CD8-positive, alpha-beta T cell (primary cell): ENCODE measurements at regions of chr13 and their contacts with region 1.

Region 1: GRCh38 chr13:99087096-99087953 is 109.5 kb upstream of the DOCK9 start:
- DNase-seq: peak; percentile 84 to 96 (median 93)
- ATAC-seq: peak; percentile 74
- H3K4me3 ChIP-seq: peak overlapping the region; percentile 66 to 78
- H3K4me3 Mint-ChIP-seq: peak overlapping the region; percentile 94
- H3K27ac ChIP-seq: peak overlapping the region; percentile 85 to 93
- H3K27ac Mint-ChIP-seq: peak overlapping the region; percentile 99
- H3K4me1 ChIP-seq: peaks cover 43% of the 10 kb centered on the region
- H3K4me1 Mint-ChIP-seq: peaks cover 43% of the 10 kb centered on the region
- H3K27me3 ChIP-seq: no peaks in the 10 kb centered on the region
- H3K27me3 Mint-ChIP-seq: no peaks in the 10 kb centered on the region
- CTCF ChIP-seq: peak; percentile 46

Region 2: GRCh38 chr13:98910501-98910951 is 176.8 kb before region 1 on chr13:
- CTCF ChIA-PET with region 1: no interaction called
- POLR2A ChIA-PET with region 1: interaction called, 3 read pairs
- intact Hi-C with region 1: loop called in 1 of 2 experiments (anchors 5 kb)
- DNase-seq: peak in 5 of 9 experiments; percentile 12 to 48 (median 23)
- ATAC-seq: peak; percentile 77
- H3K4me3 ChIP-seq: no peak overlapping the region
- H3K4me3 Mint-ChIP-seq: peak overlapping the region; percentile 38
- H3K27ac ChIP-seq: peak overlapping the region in 1 of 2 experiments; percentile 17
- H3K27ac Mint-ChIP-seq: peak overlapping the region; percentile 92
- H3K4me1 ChIP-seq: peaks cover 15% of the 10 kb centered on the region
- H3K4me1 Mint-ChIP-seq: peaks cover 24% of the 10 kb centered on the region
- H3K27me3 ChIP-seq: no peaks in the 10 kb centered on the region
- H3K27me3 Mint-ChIP-seq: no peaks in the 10 kb centered on the region
- CTCF ChIP-seq: no peak

Region 3: GRCh38 chr13:99051768-99052455 is 35.4 kb before region 1 on chr13:
- CTCF ChIA-PET with region 1: interaction called, 7 read pairs
- POLR2A ChIA-PET with region 1: interaction called, 43 read pairs
- intact Hi-C with region 1: loop called (anchors 1 to 2 kb)
- DNase-seq: peak in 2 of 9 experiments; percentile 48 to 76
- ATAC-seq: peak; percentile 48
- H3K4me3 ChIP-seq: peak overlapping the region in 1 of 2 experiments; percentile 18
- H3K4me3 Mint-ChIP-seq: peak overlapping the region; percentile 74
- H3K27ac ChIP-seq: peak overlapping the region; percentile 16 to 33
- H3K27ac Mint-ChIP-seq: peak overlapping the region; percentile 94
- H3K4me1 ChIP-seq: peaks cover 94% of the 10 kb centered on the region
- H3K4me1 Mint-ChIP-seq: peaks cover 86% of the 10 kb centered on the region
- H3K27me3 ChIP-seq: no peaks in the 10 kb centered on the region
- H3K27me3 Mint-ChIP-seq: no peaks in the 10 kb centered on the region
- CTCF ChIP-seq: no peak

Region 4: GRCh38 chr13:99124794-99125316 is 37.5 kb after region 1 on chr13:
- CTCF ChIA-PET with region 1: no interaction called
- POLR2A ChIA-PET with region 1: no interaction called
- intact Hi-C with region 1: loop called in 1 of 2 experiments (anchors 2 kb)
- DNase-seq: peak in 3 of 9 experiments; percentile 19 to 57 (median 55)
- ATAC-seq: peak; percentile 75
- H3K4me3 ChIP-seq: no peak overlapping the region
- H3K4me3 Mint-ChIP-seq: no peak overlapping the region
- H3K27ac ChIP-seq: no peak overlapping the region
- H3K27ac Mint-ChIP-seq: no peak overlapping the region
- H3K4me1 ChIP-seq: no peaks in the 10 kb centered on the region
- H3K4me1 Mint-ChIP-seq: peaks cover 15% of the 10 kb centered on the region
- H3K27me3 ChIP-seq: no peaks in the 10 kb centered on the region
- H3K27me3 Mint-ChIP-seq: no peaks in the 10 kb centered on the region
- CTCF ChIP-seq: no peak

Region 5: DNA sequence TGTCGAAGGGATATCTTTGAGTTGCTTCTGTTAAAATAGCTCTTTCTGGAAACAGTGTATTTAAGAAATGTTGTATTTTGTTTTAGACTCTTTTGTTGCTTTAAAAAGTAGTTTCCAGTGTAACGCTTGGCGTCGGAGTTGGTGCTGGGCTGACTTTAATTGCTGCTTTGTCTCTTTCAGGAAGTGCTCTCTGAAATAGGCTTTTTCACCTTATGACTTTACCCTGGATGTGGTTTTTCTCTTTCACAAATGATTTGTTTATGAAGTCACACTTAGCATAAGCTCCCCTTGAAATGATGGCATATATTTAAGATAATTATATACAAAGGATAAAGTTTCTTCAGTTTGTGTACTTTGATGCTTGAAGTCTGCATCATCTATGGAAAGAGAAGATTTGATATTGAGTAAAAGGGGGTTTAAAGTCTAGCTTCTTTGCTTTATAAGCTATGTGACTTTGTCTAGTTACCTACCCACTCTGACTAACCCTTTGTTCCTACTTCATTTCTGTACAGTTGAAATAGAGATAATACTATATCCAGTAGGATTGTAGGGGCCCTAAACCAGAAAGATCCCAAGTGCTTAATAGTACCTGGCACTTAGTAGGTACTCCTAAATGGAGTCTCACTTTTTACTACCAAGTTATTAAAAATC is 171.0 kb after region 1 on chr13 and contains the start of gene GPR18:
- CTCF ChIA-PET with region 1: interaction called, 3 read pairs
- POLR2A ChIA-PET with region 1: interaction called, 3 read pairs
- intact Hi-C with region 1: loop called in 1 of 2 experiments (anchors 5 kb)
- DNase-seq: peak in 4 of 9 experiments; percentile 41 to 80 (median 53)
- ATAC-seq: peak; percentile 77
- H3K4me3 ChIP-seq: peak within 1 kb of the TSS; percentile 55 to 63
- H3K4me3 Mint-ChIP-seq: peak within 1 kb of the TSS; percentile 91
- H3K27ac ChIP-seq: peak within 1 kb of the TSS; percentile 67 to 82
- H3K27ac Mint-ChIP-seq: peak within 1 kb of the TSS; percentile 94
- H3K4me1 ChIP-seq: peaks cover 63% of the 10 kb centered on the region
- H3K4me1 Mint-ChIP-seq: peaks cover 74% of the 10 kb centered on the region
- H3K27me3 ChIP-seq: no peaks in the 10 kb centered on the region
- H3K27me3 Mint-ChIP-seq: no peaks in the 10 kb centered on the region
- CTCF ChIP-seq: no peak
- total RNA-seq, gene GPR18: 31.9 to 36.2 TPM

Region 6: GRCh38 chr13:99501184-99501847 is 414.0 kb after region 1 on chr13 and contains the start of gene TM9SF2:
- CTCF ChIA-PET with region 1: no interaction called
- POLR2A ChIA-PET with region 1: interaction called, 3 read pairs
- intact Hi-C with region 1: loop called (anchors 1 to 2 kb)
- DNase-seq: peak; percentile 92 to 99 (median 97)
- ATAC-seq: peak; percentile 59
- H3K4me3 ChIP-seq: peak within 1 kb of the TSS; percentile 83 to 91
- H3K4me3 Mint-ChIP-seq: peak within 1 kb of the TSS; percentile 99
- H3K27ac ChIP-seq: peak within 1 kb of the TSS; percentile 86 to 88
- H3K27ac Mint-ChIP-seq: peak within 1 kb of the TSS; percentile 98
- H3K4me1 ChIP-seq: peaks cover 66% of the 10 kb centered on the region
- H3K4me1 Mint-ChIP-seq: peaks cover 81% of the 10 kb centered on the region
- H3K27me3 ChIP-seq: no peaks in the 10 kb centered on the region
- H3K27me3 Mint-ChIP-seq: no peaks in the 10 kb centered on the region
- CTCF ChIP-seq: no peak
- total RNA-seq, gene TM9SF2: 42.7 to 47.5 TPM